Activated CD8-positive, alpha-beta T cell treated with anti-CD3 and anti-CD28 coated beads, Interleukin-2, amount 10 ng/mL, durations not matched to agents 7 days and 5 days (primary cell): ENCODE measurements at regions of chr1 and their contacts with region 1.

Region 1: DNA sequence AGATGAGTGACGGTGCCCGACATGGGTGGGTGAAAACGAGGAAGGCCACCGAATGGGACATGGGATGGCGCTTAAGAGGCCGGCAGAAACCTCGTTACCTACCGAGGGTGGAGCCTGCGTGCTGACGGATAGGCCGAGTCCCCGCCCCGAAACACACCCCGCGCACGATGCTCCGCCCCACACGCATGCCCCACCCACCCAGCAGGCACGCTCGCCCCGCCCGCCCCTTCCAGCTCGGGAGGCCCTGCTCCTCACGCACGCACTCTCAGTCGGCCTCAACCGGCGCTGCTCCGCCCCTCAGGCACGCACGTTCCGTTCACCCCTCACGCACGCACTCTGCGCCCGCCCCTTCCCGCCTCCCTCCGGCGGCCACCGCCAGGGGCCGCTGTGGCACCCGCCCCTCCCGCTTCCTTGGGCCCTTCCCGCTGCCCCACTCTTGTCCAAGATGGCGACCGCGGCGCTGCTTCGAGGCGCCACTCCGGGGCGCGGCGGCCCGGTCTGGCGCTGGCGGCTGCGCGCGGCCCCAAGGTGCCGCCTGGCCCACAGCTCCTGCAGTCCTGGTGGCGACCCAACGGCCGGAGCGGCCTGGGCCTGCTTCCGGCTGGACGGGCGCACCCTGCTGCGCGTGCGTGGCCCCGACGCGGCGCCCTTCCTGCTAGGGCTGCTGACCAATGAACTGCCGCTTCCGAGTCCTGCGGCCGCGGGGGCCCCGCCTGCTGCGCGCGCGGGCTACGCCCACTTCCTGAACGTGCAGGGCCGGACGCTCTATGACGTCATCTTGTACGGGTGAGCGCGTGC is at the start of gene IBA57:
- DNase-seq: peak; percentile 100
- ATAC-seq: peak; percentile 87
- H3K4me3 Mint-ChIP-seq: peak within 1 kb of the TSS; percentile 78
- H3K27ac Mint-ChIP-seq: peak within 1 kb of the TSS; percentile 94
- H3K4me1 Mint-ChIP-seq: peaks cover 43% of the 10 kb centered on the region
- H3K27me3 Mint-ChIP-seq: no peaks in the 10 kb centered on the region
- total RNA-seq, gene IBA57: 7.5 to 8.9 TPM

Region 2: DNA sequence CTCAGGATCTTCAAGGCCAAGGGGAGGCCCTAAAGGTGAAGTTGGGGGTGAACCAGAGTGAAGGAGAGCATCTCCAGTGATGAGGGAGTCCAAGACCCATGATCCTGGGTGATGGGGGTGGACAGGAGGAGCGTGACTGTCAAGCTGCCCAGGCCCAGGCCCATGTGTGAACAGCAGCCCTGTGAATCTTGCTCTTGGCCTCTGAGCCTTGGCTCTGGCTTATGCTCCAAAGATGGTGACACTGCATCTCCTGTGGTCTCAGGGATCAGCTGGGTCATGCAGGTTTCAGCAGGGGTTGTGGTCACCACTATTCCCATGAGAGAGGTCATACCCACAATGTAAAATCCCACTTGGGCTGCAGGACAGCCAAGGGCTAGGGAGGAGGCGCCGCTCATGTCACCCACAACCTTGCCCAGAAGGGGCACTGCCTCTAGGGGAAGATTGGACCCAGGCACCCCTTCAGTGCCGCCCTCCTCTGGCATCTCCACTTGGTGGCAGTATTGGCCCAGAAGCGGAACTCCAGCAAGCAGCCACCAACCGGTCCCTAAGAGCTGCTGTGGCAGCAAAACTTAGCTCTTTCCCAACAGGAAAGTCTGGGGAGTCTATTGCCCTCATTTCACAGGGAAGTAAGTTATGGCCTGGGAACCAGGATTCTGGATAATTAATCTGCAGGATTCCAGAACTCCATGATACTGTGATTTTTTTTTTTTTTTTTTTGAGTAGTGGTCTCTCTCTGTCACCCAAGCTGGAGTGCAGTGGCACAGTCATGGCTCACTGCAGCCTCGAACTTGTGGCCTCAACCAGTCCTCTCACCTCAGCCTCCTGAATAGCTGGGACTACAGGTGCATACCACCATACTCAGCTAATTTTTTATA is 166.3 kb before region 1 on chr1:
- CTCF ChIA-PET with region 1: interaction called, 12 read pairs
- POLR2A ChIA-PET with region 1: no interaction called
- DNase-seq: peak; percentile 80
- ATAC-seq: peak; percentile 95
- H3K4me3 Mint-ChIP-seq: no peak overlapping the region
- H3K27ac Mint-ChIP-seq: no peak overlapping the region
- H3K4me1 Mint-ChIP-seq: no peaks in the 10 kb centered on the region
- H3K27me3 Mint-ChIP-seq: peaks cover 25% of the 10 kb centered on the region

Region 3: GRCh38 chr1:228060458-228061190 is 104.9 kb before region 1 on chr1:
- CTCF ChIA-PET with region 1: no interaction called
- POLR2A ChIA-PET with region 1: no interaction called
- DNase-seq: no peak
- ATAC-seq: no peak
- H3K4me3 Mint-ChIP-seq: no peak overlapping the region
- H3K27ac Mint-ChIP-seq: no peak overlapping the region
- H3K4me1 Mint-ChIP-seq: peaks cover 7% of the 10 kb centered on the region
- H3K27me3 Mint-ChIP-seq: peaks cover 46% of the 10 kb centered on the region

Region 4: GRCh38 chr1:228082135-228082891 is 83.3 kb before region 1 on chr1 and contains the start of gene ARF1:
- CTCF ChIA-PET with region 1: interaction called, 4 read pairs
- POLR2A ChIA-PET with region 1: interaction called, 23 read pairs
- DNase-seq: peak; percentile 92
- ATAC-seq: peak; percentile 89
- H3K4me3 Mint-ChIP-seq: peak within 1 kb of the TSS; percentile 94
- H3K27ac Mint-ChIP-seq: peak within 1 kb of the TSS; percentile 98
- H3K4me1 Mint-ChIP-seq: peaks cover 47% of the 10 kb centered on the region
- H3K27me3 Mint-ChIP-seq: no peaks in the 10 kb centered on the region
- total RNA-seq, gene ARF1: 313 to 322 TPM

Region 5: DNA sequence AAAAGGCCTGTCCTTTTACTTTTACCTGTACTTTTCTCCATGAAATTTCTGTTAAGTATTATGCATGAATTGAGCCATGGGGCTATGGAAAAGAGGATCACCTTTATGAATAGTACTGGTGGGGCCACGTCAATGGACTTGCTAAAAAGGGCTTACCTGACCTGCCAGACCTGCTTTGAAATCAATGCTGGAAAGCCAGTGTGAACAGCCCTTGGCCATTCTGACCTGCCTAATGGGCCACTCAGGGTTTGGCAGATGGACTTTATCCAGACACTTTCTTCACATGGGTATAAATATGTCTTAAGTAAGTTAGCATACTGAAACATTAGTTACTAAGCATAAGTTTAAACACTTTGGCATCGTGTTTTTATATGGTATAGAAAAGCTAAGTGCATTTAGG is 33.8 kb before region 1 on chr1:
- CTCF ChIA-PET with region 1: interaction called, 48 read pairs
- POLR2A ChIA-PET with region 1: interaction called, 15 read pairs
- DNase-seq: no peak
- ATAC-seq: no peak
- H3K4me3 Mint-ChIP-seq: no peak overlapping the region
- H3K27ac Mint-ChIP-seq: no peak overlapping the region
- H3K4me1 Mint-ChIP-seq: peaks cover 15% of the 10 kb centered on the region
- H3K27me3 Mint-ChIP-seq: peaks cover 24% of the 10 kb centered on the region

Region 6: DNA sequence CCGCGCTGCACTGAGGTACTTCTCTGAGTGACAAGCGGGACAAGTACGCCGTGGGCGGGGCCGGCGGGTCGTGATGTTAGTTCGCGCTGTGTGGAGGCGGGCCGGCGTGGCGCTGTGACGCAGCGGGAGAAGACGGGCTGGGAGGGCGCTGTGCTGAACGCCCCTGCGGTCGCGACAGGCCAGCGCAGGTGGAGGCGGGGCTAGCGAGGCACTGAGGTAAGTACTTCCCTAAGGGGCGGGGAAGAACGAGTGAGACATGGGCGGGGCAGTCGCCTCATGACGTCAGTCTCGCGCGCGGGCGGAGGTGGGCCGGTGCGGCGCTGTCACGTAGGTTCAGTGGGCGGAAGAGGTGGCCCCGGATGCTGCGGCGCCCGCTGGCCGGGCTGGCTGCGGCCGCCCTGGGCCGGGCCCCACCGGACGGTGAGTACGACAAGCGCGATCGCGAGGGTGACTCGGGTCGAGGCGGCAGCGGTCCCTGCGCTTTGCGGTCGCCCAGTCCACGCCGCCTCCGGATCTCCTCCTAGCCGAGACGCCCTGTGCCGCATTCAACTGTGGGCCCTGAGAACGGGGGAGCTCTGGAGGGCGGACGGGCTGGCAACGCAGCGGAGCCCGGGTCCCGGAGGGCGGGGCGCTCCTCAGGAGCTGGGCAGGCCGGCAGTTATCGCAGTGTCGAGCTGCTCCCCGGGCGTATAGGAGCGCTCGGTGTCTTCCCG is 25.5 kb before region 1 on chr1 and contains the start of gene GUK1:
- CTCF ChIA-PET with region 1: interaction called, 29 read pairs
- POLR2A ChIA-PET with region 1: interaction called, 38 read pairs
- DNase-seq: peak; percentile 100
- ATAC-seq: peak; percentile 91
- H3K4me3 Mint-ChIP-seq: peak within 1 kb of the TSS; percentile 100
- H3K27ac Mint-ChIP-seq: peak within 1 kb of the TSS; percentile 99
- H3K4me1 Mint-ChIP-seq: peaks cover 42% of the 10 kb centered on the region
- H3K27me3 Mint-ChIP-seq: peaks cover 8% of the 10 kb centered on the region
- total RNA-seq, gene GUK1: 339 to 344 TPM